ENCODE measurements at regions of chr13 and their contacts with region 1.

Region 1: GRCh38 chr13:45280751-45281634 is 60.0 kb downstream of the TPT1 start:
- DNase-seq: peak; percentile 79
- CTCF ChIP-seq: peak; percentile 72

Region 2: GRCh38 chr13:45269204-45269603 is 11.8 kb before region 1 on chr13:
- CTCF ChIA-PET with region 1: interaction called, 11 read pairs
- POLR2A ChIA-PET with region 1: no interaction called
- DNase-seq: no peak
- CTCF ChIP-seq: no peak

Region 3: GRCh38 chr13:45292176-45292575 is 11.2 kb after region 1 on chr13:
- CTCF ChIA-PET with region 1: interaction called, 29 read pairs
- POLR2A ChIA-PET with region 1: no interaction called
- DNase-seq: no peak
- CTCF ChIP-seq: no peak

Region 4: GRCh38 chr13:45297456-45298205 is 16.6 kb after region 1 on chr13:
- CTCF ChIA-PET with region 1: interaction called, 29 read pairs
- POLR2A ChIA-PET with region 1: no interaction called
- DNase-seq: no peak
- CTCF ChIP-seq: no peak

Region 5: GRCh38 chr13:45838171-45838745 is 557.3 kb after region 1 on chr13:
- CTCF ChIA-PET with region 1: no interaction called
- POLR2A ChIA-PET with region 1: no interaction called
- DNase-seq: no peak
- CTCF ChIP-seq: no peak

Measured in GM10248 (cell line).